Mammary epithelial cell (primary cell): ENCODE measurements at regions of chr13 and their contacts with region 1.

Region 1: DNA sequence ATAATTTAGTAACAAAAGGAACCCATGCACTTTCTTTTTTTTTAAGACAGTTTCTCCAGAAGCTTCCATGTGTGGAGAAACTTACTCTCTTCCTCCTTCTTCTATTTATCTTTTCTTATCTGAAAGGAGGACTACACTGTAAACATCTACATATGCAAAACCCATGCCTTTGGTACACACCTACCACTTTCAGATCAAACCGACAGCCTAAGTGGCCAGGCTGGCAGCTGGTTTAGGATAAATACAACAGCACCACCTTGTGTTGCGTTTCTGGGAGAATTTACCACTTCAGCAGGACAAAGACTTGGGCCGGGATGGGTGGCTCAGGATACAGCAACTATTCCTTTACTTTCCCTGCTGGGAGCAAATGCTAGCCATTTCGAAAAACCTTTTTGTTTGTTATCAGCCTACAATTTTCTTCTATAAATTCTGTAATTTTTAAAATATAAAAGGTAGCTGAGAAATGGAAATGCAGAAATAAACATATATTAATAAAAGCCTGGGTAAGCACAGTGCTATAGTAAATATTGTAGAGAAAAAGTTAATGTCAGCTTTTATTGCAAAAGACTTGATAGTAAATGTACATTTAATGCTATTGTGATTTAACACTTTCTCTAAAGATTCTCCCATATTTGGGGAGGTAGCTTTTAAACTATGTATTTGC is 94.0 kb upstream of the RFC3 start:
- DNase-seq: peak; percentile 64
- H3K4me3 ChIP-seq: no peak overlapping the region
- H3K27ac ChIP-seq: no peak overlapping the region
- H3K4me1 ChIP-seq: peaks cover 11% of the 10 kb centered on the region
- H3K27me3 ChIP-seq: no peaks in the 10 kb centered on the region
- CTCF ChIP-seq: peak; percentile 67 to 84

Region 2: DNA sequence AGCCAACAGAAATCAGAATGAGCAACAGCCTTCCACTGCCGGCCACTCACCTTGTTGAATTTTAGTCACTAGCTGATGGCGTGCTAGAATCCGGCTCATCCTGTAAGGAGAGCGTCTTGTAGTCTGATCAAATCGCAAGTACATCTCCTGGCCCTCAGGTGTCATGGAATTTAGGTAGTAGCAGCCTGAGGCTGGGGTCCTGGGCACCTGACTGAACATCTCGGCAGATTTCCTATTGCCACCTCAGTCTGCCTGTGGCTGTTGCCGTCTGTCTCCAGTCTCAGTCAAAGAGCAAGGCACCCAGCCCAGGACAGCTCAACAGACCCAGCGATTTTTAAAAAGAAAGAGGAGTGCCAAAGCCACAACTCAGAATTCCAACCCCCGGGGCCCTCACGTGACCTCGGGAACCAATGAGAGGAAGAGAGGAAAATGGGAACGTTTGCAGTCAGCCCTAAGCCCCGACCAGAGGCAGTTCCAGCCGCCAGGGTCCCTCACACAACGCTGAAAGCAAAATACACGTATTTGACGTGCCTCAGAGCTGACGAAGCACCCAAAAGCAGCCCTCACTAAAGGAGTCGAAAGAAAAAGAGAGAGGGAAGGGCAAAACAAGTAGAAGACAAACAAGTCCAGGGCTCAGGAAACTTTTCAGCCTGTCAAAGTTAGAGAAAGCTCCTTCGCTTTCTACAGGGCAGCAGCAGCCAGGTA is 438.3 kb before region 1 on chr13 and contains the start of gene STARD13:
- CTCF ChIA-PET with region 1: no interaction called
- dilution Hi-C with region 1: no loop called
- in situ Hi-C with region 1: no loop called
- intact Hi-C with region 1: loop called (anchors 10 kb)
- DNase-seq: peak; percentile 96
- H3K4me3 ChIP-seq: peak within 1 kb of the TSS; percentile 67 to 94 (median 71)
- H3K27ac ChIP-seq: peak within 1 kb of the TSS; percentile 99
- H3K4me1 ChIP-seq: peaks cover 29% of the 10 kb centered on the region
- H3K27me3 ChIP-seq: no peaks in the 10 kb centered on the region
- CTCF ChIP-seq: peak; percentile 20 to 36
- total RNA-seq, gene STARD13: 10.8 to 15.5 TPM

Region 3: GRCh38 chr13:33634546-33634982 is 89.3 kb before region 1 on chr13:
- CTCF ChIA-PET with region 1: no interaction called
- dilution Hi-C with region 1: no loop called
- in situ Hi-C with region 1: no loop called
- intact Hi-C with region 1: loop called (anchors 5 kb)
- DNase-seq: peak; percentile 31
- H3K4me3 ChIP-seq: no peak overlapping the region
- H3K27ac ChIP-seq: peak overlapping the region; percentile 87
- H3K4me1 ChIP-seq: peaks cover 47% of the 10 kb centered on the region
- H3K27me3 ChIP-seq: no peaks in the 10 kb centered on the region
- CTCF ChIP-seq: no peak

Region 4: GRCh38 chr13:33775339-33776108 is 51.6 kb after region 1 on chr13:
- CTCF ChIA-PET with region 1: no interaction called
- dilution Hi-C with region 1: no loop called
- in situ Hi-C with region 1: no loop called
- intact Hi-C with region 1: no loop called
- DNase-seq: no peak
- H3K4me3 ChIP-seq: no peak overlapping the region
- H3K27ac ChIP-seq: no peak overlapping the region
- H3K4me1 ChIP-seq: no peaks in the 10 kb centered on the region
- H3K27me3 ChIP-seq: peaks cover 3% of the 10 kb centered on the region
- CTCF ChIP-seq: no peak

Region 5: DNA sequence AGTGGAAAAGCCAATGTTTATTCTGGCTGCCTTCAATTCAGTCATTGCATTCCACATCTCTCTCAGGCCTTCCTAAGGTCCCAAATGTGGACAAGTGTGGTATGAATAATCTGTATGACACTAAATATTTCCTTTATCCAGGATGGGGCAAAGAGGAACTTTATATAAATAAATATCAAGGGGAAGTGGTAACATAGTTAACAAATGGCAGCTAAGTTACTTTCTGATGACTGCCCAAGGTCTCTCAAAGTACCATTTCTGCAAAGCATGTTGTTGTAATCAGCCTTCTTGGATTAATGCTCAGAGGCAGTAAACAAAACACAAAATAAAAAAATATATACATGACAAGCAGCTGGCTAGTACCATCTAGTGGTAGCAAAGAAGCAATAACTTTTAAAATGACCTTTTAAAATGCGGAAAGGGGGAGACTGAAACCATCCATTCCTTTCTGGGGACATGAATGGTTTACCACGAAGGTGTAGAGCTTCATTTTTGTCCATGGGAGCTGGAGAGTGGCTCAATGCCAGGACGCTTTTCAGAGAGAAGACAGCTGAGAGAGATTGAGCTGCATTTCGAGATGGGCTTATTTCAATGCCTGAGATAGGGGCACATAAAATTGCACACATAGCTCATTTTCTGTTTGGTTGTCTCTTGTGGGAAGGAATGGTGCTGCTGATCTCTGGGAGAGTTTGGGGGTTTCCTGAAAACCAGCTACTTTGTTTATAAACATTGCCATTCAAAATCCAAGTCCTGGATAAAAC is 353.2 kb after region 1 on chr13:
- CTCF ChIA-PET with region 1: no interaction called
- dilution Hi-C with region 1: no loop called
- in situ Hi-C with region 1: no loop called
- intact Hi-C with region 1: loop called (anchors 1 kb)
- DNase-seq: peak; percentile 16
- H3K4me3 ChIP-seq: no peak overlapping the region
- H3K27ac ChIP-seq: peak overlapping the region; percentile 25
- H3K4me1 ChIP-seq: peaks cover 10% of the 10 kb centered on the region
- H3K27me3 ChIP-seq: no peaks in the 10 kb centered on the region
- CTCF ChIP-seq: peak; percentile 54 to 68